ENCODE measurements at regions of chr17 and their contacts with region 1.

Region 1: GRCh38 chr17:49908782-49909714 is 59.9 kb upstream of the DLX4 start:
- DNase-seq: no peak
- ATAC-seq: peak; percentile 6; the same call in 1 of the 3 replicates
- H3K4me3 ChIP-seq: no peak overlapping the region
- H3K27ac ChIP-seq: no peak overlapping the region
- H3K4me1 ChIP-seq: no peaks in the 10 kb centered on the region
- H3K27me3 ChIP-seq: peaks cover 11 to 87% of the 10 kb centered on the region in 2 experiments; a peak in 4 of 5 replicates
- CTCF ChIP-seq: no peak
- EP300 ChIP-seq: no peak
- POLR2A ChIP-seq: no peak
- RAD21 ChIP-seq: no peak

Region 2: GRCh38 chr17:49944273-49944890 is 35.3 kb after region 1 on chr17:
- CTCF ChIA-PET with region 1: no interaction called
- POLR2A ChIA-PET with region 1: no interaction called
- in situ Hi-C with region 1: loop called (anchors 5 kb)
- intact Hi-C with region 1: no loop called
- DNase-seq: no peak
- ATAC-seq: peak; percentile 13; the same call in 1 of the 3 replicates
- H3K4me3 ChIP-seq: no peak overlapping the region; a peak in 1 of 6 replicates
- H3K27ac ChIP-seq: no peak overlapping the region
- H3K4me1 ChIP-seq: peaks cover 69% of the 10 kb centered on the region
- H3K27me3 ChIP-seq: peaks cover 10 to 71% of the 10 kb centered on the region in 2 experiments; a peak in 4 of 5 replicates
- CTCF ChIP-seq: no peak
- EP300 ChIP-seq: no peak
- POLR2A ChIP-seq: no peak
- RAD21 ChIP-seq: no peak

Region 3: GRCh38 chr17:50177983-50178834 is 269.2 kb after region 1 on chr17:
- CTCF ChIA-PET with region 1: no interaction called
- POLR2A ChIA-PET with region 1: no interaction called
- in situ Hi-C with region 1: no loop called
- intact Hi-C with region 1: no loop called
- DNase-seq: peak; percentile 89
- ATAC-seq: peak; percentile 93
- H3K4me3 ChIP-seq: peak overlapping the region; percentile 35 to 74 (median 47); a peak in 5 of 6 replicates
- H3K27ac ChIP-seq: no peak overlapping the region
- H3K4me1 ChIP-seq: peaks cover 73% of the 10 kb centered on the region
- H3K27me3 ChIP-seq: peaks cover under 1 to 16% of the 10 kb centered on the region in 2 experiments; a peak in 4 of 5 replicates
- CTCF ChIP-seq: peak; percentile 96
- EP300 ChIP-seq: peak in 1 of 2 experiments; percentile 17; a peak in 1 of 4 replicates
- POLR2A ChIP-seq: peak in 1 of 2 experiments; percentile 44; a peak in 3 of 4 replicates
- RAD21 ChIP-seq: peak; percentile 65